HEK293T (cell line): ENCODE measurements at regions of chr5 and their contacts with region 1.

Region 1: GRCh38 chr5:59188419-59189225 is 605.7 kb downstream of the RAB3C start:
- DNase-seq: peak; percentile 70

Region 2: GRCh38 chr5:59367791-59368394 is 179.3 kb after region 1 on chr5:
- CTCF ChIA-PET with region 1: interaction called, 11 read pairs
- POLR2A ChIA-PET with region 1: no interaction called
- DNase-seq: peak; percentile 59

Region 3: GRCh38 chr5:59380350-59380951 is 191.8 kb after region 1 on chr5:
- CTCF ChIA-PET with region 1: interaction called, 12 read pairs
- POLR2A ChIA-PET with region 1: interaction called, 3 read pairs
- DNase-seq: peak; percentile 45